ENCODE measurements at regions of chr6 and their contacts with region 1.

Region 1: GRCh38 chr6:154252678-154253077 is 103.9 kb downstream of the IPCEF1 start:
- DNase-seq: no peak
- ATAC-seq: no peak
- H3K4me3 Mint-ChIP-seq: no peak overlapping the region
- H3K27ac Mint-ChIP-seq: peak overlapping the region; percentile 48
- H3K4me1 Mint-ChIP-seq: peaks cover 62% of the 10 kb centered on the region
- H3K27me3 Mint-ChIP-seq: no peaks in the 10 kb centered on the region

Region 2: GRCh38 chr6:153563001-153563400 is 689.7 kb before region 1 on chr6:
- CTCF ChIA-PET with region 1: no interaction called
- POLR2A ChIA-PET with region 1: no interaction called
- DNase-seq: no peak
- ATAC-seq: no peak
- H3K4me3 Mint-ChIP-seq: no peak overlapping the region
- H3K27ac Mint-ChIP-seq: no peak overlapping the region
- H3K4me1 Mint-ChIP-seq: no peaks in the 10 kb centered on the region
- H3K27me3 Mint-ChIP-seq: no peaks in the 10 kb centered on the region

Region 3: GRCh38 chr6:154206996-154207395 is 45.7 kb before region 1 on chr6:
- CTCF ChIA-PET with region 1: no interaction called
- POLR2A ChIA-PET with region 1: no interaction called
- DNase-seq: no peak
- ATAC-seq: no peak
- H3K4me3 Mint-ChIP-seq: no peak overlapping the region
- H3K27ac Mint-ChIP-seq: no peak overlapping the region
- H3K4me1 Mint-ChIP-seq: peaks cover 6% of the 10 kb centered on the region
- H3K27me3 Mint-ChIP-seq: no peaks in the 10 kb centered on the region

Region 4: GRCh38 chr6:154267508-154268106 is 14.9 kb after region 1 on chr6:
- CTCF ChIA-PET with region 1: interaction called, 13 read pairs
- POLR2A ChIA-PET with region 1: interaction called, 4 read pairs
- DNase-seq: no peak
- ATAC-seq: peak; percentile 33
- H3K4me3 Mint-ChIP-seq: no peak overlapping the region
- H3K27ac Mint-ChIP-seq: no peak overlapping the region
- H3K4me1 Mint-ChIP-seq: peaks cover 20% of the 10 kb centered on the region
- H3K27me3 Mint-ChIP-seq: no peaks in the 10 kb centered on the region